WTC11 (cell line): ENCODE measurements at regions of chr4 and their contacts with region 1.

Region 1: GRCh38 chr4:99808260-99808857 is 8.3 kb upstream of the DAPP1 start:
- DNase-seq: peak; percentile 80
- ATAC-seq: peak; percentile 95
- H3K4me3 Mint-ChIP-seq: no peak overlapping the region
- H3K27ac Mint-ChIP-seq: no peak overlapping the region
- H3K4me1 Mint-ChIP-seq: peaks cover 5% of the 10 kb centered on the region; the same call in 1 of the 2 replicates
- H3K27me3 Mint-ChIP-seq: no peaks in the 10 kb centered on the region
- CTCF ChIP-seq: peak; percentile 70

Region 2: DNA sequence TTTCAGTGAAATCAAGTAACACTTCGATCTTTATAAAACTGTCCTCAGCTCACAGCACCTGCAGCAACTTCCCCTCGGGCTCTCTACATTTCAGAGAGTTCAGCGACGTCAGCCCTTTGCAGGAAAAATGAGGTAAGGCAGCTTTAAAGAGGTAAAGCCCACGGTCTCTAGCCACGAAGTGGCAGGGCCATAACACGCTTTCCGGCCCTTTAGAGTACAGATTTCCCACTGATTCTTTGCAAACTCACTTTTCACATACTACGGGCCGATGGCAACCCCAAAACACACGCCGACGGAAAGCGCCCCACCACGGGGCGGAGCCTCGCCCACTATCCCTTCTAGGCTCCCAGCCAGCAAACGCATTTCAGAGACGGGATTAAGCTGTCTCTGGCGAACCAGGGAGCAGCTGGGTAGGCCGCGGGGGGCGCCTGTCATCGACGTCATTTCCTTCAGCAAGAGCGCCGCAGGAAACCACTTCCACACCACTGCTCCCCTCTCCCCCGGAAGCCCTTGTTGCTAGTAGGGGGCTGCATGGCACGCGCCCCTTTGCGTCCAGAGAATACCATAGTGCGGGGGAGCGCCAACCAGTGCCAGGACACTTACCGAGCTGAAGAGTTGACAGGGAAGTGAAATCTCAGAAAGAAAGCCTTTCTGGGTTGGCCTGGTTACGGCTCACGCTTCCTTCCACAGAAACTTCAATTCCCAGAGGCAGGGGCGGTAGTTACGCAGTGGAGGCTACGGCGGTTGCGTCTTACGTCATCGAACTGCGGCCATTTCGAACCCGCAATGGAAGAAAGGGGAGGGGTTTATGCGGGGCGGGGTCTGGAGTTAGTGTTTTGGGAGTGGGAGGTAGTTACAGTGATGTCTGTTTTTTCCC is 244.8 kb before region 1 on chr4 and contains the start of gene TRMT10A:
- CTCF ChIA-PET with region 1: interaction called, 25 read pairs
- POLR2A ChIA-PET with region 1: interaction called, 5 read pairs
- DNase-seq: peak; percentile 95
- ATAC-seq: peak; percentile 94
- H3K4me3 Mint-ChIP-seq: peak within 1 kb of the TSS; percentile 97
- H3K27ac Mint-ChIP-seq: peak within 1 kb of the TSS; percentile 99
- H3K4me1 Mint-ChIP-seq: 0 out of 2 replicates have a peak, but pooled peaks cover 3% of the 10 kb centered on the region
- H3K27me3 Mint-ChIP-seq: no peaks in the 10 kb centered on the region; the same call in 1 of the 2 replicates
- CTCF ChIP-seq: no peak
- total RNA-seq, gene TRMT10A: 3.3 to 4.5 TPM (median 3.7 TPM) in 3 replicates

Region 3: DNA sequence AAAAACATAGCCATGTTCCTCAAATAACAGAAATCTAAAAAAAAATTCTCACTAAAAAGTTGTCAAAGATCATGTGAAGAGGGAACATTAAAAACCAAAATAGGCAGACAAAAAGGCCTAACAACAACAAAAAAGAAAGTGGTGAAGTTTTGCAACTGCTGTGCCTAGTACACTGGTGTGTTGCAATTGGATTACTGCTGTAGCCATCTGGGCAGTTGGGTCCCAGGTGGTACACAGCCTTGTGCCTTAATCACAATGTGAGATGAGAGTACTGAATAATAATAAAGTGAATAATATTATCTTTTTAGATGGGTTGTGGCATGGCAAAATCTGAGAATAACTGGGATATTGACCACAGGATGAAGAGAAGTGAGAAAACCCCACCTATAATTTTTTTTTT is 162.7 kb before region 1 on chr4:
- CTCF ChIA-PET with region 1: interaction called, 11 read pairs
- POLR2A ChIA-PET with region 1: no interaction called
- DNase-seq: no peak
- ATAC-seq: no peak
- H3K4me3 Mint-ChIP-seq: no peak overlapping the region
- H3K27ac Mint-ChIP-seq: no peak overlapping the region
- H3K4me1 Mint-ChIP-seq: peaks cover 54% of the 10 kb centered on the region
- H3K27me3 Mint-ChIP-seq: peaks cover 75% of the 10 kb centered on the region
- CTCF ChIP-seq: no peak

Region 4: GRCh38 chr4:99723612-99724011 is 84.7 kb before region 1 on chr4:
- CTCF ChIA-PET with region 1: interaction called, 13 read pairs
- POLR2A ChIA-PET with region 1: interaction called, 3 read pairs
- DNase-seq: no peak
- ATAC-seq: peak; percentile 51; the same call in 1 of the 2 replicates
- H3K4me3 Mint-ChIP-seq: no peak overlapping the region
- H3K27ac Mint-ChIP-seq: no peak overlapping the region
- H3K4me1 Mint-ChIP-seq: peaks cover 32% of the 10 kb centered on the region
- H3K27me3 Mint-ChIP-seq: no peaks in the 10 kb centered on the region
- CTCF ChIP-seq: no peak

Region 5: GRCh38 chr4:99885063-99885664 is 76.8 kb after region 1 on chr4:
- CTCF ChIA-PET with region 1: interaction called, 16 read pairs
- POLR2A ChIA-PET with region 1: no interaction called
- DNase-seq: no peak
- ATAC-seq: no peak
- H3K4me3 Mint-ChIP-seq: no peak overlapping the region
- H3K27ac Mint-ChIP-seq: no peak overlapping the region
- H3K4me1 Mint-ChIP-seq: no peaks in the 10 kb centered on the region
- H3K27me3 Mint-ChIP-seq: no peaks in the 10 kb centered on the region
- CTCF ChIP-seq: 0 out of 2 replicates have a peak, but pooled peaks have one; percentile 19

Region 6: DNA sequence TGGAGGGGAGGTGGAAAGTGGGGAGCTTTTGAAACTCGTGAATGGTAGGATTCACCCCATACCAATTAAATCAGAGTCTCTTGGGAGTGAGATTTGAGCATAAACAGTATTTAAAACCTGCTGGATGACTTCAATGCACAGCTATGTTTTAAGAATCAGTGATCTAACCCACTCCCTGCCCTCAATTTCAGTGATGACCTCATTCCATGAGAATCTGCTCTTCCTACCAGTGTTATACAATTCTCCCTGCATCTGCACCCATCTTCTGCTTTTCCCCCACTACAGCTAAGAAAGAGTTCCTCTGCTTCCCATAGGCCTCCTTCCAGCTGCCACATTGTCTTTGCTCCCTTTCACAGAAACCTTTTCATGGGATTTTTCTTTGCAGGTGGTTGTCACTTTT is 160.0 kb after region 1 on chr4:
- CTCF ChIA-PET with region 1: no interaction called
- POLR2A ChIA-PET with region 1: no interaction called
- DNase-seq: no peak
- ATAC-seq: no peak; the same call in 1 of the 2 replicates
- H3K4me3 Mint-ChIP-seq: no peak overlapping the region
- H3K27ac Mint-ChIP-seq: no peak overlapping the region
- H3K4me1 Mint-ChIP-seq: 0 out of 2 replicates have a peak, but pooled peaks cover under 1% of the 10 kb centered on the region
- H3K27me3 Mint-ChIP-seq: no peaks in the 10 kb centered on the region
- CTCF ChIP-seq: no peak